Thyroid gland (tissue), 4 donors: ENCODE measurements at regions of chr18 and their contacts with region 1.

Region 1: DNA sequence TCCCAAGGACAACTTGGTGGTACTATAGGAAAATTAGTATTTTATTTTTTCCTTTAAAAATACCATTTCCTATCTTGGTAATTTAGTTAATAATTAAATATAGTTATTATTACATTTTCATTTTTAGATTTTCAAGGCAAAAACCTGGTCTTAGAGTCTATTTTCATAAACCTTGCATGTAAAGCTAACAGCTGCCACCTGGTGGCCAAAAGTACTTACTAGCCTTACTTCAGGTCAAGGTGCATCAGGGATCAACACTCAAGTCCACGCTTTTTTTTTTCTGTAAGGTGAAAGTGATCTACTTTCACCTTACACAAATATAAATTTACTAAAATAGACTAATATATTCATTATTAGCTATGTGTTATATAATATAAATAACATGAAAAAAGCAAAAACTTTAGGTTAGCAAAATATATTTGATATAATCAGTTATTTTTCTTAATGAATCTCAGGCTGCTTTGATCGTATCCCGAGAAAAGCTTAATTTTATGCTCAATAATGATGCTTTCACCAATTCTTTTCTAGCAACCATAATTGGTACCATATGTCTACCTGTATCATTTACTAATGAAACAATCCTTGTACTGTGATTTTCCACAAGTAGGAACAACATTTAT is 62.5 kb downstream of the RELCH start:
- DNase-seq: peak; percentile 88
- H3K4me3 ChIP-seq: no peak overlapping the region
- H3K27ac ChIP-seq: no peak overlapping the region
- H3K4me1 ChIP-seq: no peaks in the 10 kb centered on the region
- H3K27me3 ChIP-seq: no peaks in the 10 kb centered on the region
- CTCF ChIP-seq: peak; percentile 58 to 84 (median 72)
- POLR2A ChIP-seq: no peak

Region 2: GRCh38 chr18:62183578-62184195 is 65.9 kb before region 1 on chr18:
- intact Hi-C with region 1: loop called (anchors 2 kb)
- DNase-seq: peak; percentile 8 to 16
- H3K4me3 ChIP-seq: no peak overlapping the region
- H3K27ac ChIP-seq: no peak overlapping the region
- H3K4me1 ChIP-seq: peaks cover under 1 to 11% of the 10 kb centered on the region in 2 donors
- H3K27me3 ChIP-seq: no peaks in the 10 kb centered on the region
- CTCF ChIP-seq: peak; percentile 86 to 98 (median 95)
- POLR2A ChIP-seq: no peak

Region 3: GRCh38 chr18:62300359-62300963 is 50.9 kb after region 1 on chr18:
- intact Hi-C with region 1: no loop called
- DNase-seq: no peak
- H3K4me3 ChIP-seq: no peak overlapping the region
- H3K27ac ChIP-seq: no peak overlapping the region
- H3K4me1 ChIP-seq: no peaks in the 10 kb centered on the region
- H3K27me3 ChIP-seq: no peaks in the 10 kb centered on the region
- CTCF ChIP-seq: no peak
- POLR2A ChIP-seq: no peak